Esophagus squamous epithelium (tissue), 5 donors: ENCODE measurements at regions of chr18 and their contacts with region 1.

Region 1: DNA sequence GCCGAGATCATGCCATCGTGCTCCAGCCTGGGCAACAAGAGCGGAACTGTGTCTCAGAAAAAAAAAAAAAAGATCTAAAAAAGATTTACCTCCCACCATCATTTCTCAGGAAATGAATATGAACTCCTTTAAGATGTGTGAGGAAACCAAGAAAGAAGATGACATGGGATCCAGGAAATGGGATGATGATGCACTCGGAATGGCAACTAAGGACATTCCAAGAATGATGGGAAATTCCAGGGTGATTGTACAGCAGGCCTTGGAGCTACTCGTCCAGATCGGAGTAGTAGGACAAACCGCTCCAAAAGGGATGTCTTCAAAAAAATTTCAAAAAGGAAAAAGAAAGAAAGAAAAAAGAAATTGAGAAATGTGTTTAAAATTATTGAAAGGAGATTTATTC is 84.9 kb upstream of the PMAIP1 start:
- DNase-seq: no peak
- H3K4me3 ChIP-seq: no peak overlapping the region
- H3K27ac ChIP-seq: no peak overlapping the region
- H3K4me1 ChIP-seq: no peaks in the 10 kb centered on the region
- H3K27me3 ChIP-seq: peaks cover 0 to 4% (median 0%) of the 10 kb centered on the region in 4 donors
- CTCF ChIP-seq: no peak
- POLR2A ChIP-seq: no peak

Region 2: DNA sequence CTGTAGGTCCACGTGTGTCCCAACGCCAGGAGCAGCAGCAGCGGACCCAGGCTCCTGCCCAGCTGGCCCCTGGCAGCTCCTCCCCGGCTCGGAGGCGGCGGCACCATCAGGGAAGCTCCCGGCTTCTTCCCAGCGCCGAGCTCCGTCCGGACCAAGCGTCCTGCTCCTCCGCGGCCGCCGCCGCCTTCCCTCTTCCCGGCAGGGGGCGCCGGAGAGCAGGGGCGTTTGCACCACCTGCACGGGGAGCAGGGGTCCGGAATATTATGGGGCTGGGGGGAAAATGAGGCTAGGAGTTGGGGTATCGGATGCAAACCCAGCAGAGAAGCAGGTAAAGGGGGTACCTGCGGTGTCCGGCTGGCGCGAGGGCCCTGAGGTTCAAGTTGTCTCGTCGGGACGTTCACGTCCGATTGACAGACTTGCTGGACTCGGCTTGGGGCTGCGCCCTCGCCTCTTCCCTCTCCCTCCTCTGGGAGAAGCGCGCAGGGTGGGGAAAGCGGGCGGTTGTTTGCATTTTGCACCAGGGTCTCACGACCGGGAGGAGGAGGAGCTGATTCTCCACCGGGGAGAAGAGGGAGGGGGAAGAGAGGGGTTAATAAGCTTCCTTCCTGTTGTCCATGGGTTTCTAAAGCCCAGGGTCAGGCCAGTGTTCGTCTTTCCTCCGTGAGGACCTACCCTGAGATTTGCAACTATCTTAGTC is 117.5 kb before region 1 on chr18 and contains the start of gene CCBE1:
- intact Hi-C with region 1: loop called (anchors 10 kb)
- DNase-seq: no peak
- H3K4me3 ChIP-seq: peak within 1 kb of the TSS; percentile 37 to 70 (median 49)
- H3K27ac ChIP-seq: peak within 1 kb of the TSS in 3 of 4 donors; percentile 9 to 60 (median 30)
- H3K4me1 ChIP-seq: peaks cover 0 to 51% (median 17%) of the 10 kb centered on the region in 3 donors
- H3K27me3 ChIP-seq: peaks cover 0 to 56% (median 0%) of the 10 kb centered on the region in 4 donors
- CTCF ChIP-seq: peak; percentile 37 to 90 (median 76)
- POLR2A ChIP-seq: no peak
- total RNA-seq, gene CCBE1: 0.34 to 4.6 (median 1.3) TPM